Activated CD4-positive, alpha-beta T cell treated with anti-CD3 and anti-CD28 coated beads, Interleukin-2, amount 10 ng/mL, durations not matched to agents 7 days and 5 days (primary cell): ENCODE measurements at regions of chr10 and their contacts with region 1.

Region 1: GRCh38 chr10:69408318-69409175 is 8.2 kb downstream of the TACR2 start:
- DNase-seq: peak; percentile 92
- H3K4me3 Mint-ChIP-seq: peak overlapping the region; percentile 63
- H3K27ac Mint-ChIP-seq: peak overlapping the region; percentile 88
- H3K4me1 Mint-ChIP-seq: peaks cover 26% of the 10 kb centered on the region
- H3K27me3 Mint-ChIP-seq: no peaks in the 10 kb centered on the region

Region 2: DNA sequence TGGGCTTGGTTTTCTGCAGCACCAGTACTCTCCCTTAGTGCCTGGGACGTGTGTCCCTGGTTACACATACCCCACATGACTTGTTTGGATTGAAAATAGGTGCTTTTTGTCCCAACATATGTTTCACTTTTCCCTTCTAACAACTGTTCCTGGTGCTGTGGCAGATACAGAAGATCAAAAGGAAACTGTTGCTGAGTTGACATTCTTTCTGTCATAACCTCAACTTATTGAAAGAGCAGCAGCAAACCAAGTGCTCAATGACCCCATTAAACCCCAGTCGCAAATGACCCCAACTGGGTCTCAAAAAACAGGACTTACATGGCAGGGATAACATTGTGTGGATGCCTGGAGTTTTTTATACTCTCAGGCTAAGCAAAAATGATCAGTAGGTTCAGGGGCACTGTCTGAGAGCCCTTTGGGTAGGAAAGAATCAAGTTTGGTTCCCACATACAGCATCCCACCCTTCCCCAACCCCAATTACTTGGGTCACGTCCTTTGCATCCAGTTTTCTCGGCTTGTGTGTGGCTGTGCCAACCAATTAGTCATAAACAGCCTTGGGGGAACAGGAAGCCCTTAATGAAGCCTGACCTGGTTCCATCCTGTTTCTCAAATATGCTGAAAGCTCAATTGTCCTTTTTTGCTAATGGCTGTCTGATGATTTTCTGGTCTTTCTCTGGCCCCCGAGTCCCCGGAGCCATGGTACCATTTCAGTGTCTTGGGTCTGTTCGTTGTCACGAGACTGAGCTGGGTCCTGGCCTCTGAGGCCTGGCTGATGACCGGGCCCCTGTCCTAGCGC is 183.5 kb before region 1 on chr10:
- CTCF ChIA-PET with region 1: interaction called, 12 read pairs
- POLR2A ChIA-PET with region 1: no interaction called
- DNase-seq: no peak
- H3K4me3 Mint-ChIP-seq: no peak overlapping the region
- H3K27ac Mint-ChIP-seq: peak overlapping the region; percentile 78
- H3K4me1 Mint-ChIP-seq: peaks cover 81% of the 10 kb centered on the region
- H3K27me3 Mint-ChIP-seq: no peaks in the 10 kb centered on the region

Region 3: DNA sequence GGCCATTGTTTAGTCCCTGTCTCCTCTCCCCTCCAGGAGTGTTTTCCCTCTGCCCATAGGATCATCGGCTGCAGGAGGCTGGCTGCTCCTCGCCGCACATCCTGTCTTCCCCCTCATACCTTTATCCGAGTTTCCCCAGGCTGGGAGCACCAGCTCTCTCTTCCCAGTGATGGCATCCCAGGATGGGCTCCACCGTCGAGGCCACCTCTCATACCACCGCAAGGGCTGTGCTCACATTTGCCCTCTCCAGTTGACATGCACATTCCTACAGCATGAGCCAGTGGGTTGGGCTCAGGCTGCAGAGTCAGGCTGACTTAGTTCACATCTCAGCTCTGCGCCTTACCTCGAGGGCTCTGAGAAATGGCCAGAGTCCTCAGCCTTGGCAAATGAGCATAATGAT is 176.3 kb before region 1 on chr10:
- CTCF ChIA-PET with region 1: interaction called, 10 read pairs
- POLR2A ChIA-PET with region 1: no interaction called
- DNase-seq: no peak
- H3K4me3 Mint-ChIP-seq: peak overlapping the region; percentile 74
- H3K27ac Mint-ChIP-seq: peak overlapping the region; percentile 91
- H3K4me1 Mint-ChIP-seq: peaks cover 76% of the 10 kb centered on the region
- H3K27me3 Mint-ChIP-seq: peaks cover 1% of the 10 kb centered on the region

Region 4: DNA sequence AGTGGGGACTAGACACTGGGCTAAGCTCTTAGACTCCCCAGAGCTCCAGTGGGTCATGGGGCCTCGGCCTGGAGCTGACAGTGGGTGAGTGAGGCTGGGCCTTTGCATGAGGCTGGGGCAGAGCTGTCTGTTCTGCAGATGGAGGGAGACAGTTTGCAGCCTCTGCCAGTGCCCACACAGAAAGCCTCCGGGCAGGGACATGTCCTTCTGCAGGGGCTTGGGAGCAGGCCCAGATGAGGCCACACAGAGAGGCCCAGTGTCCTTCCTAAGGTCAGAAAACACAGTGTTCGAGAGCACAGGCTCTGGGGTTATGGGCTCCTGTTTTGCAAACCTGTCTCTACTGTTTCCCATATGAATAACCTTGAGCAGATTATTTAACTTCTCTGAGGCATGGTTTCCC is 155.4 kb before region 1 on chr10:
- CTCF ChIA-PET with region 1: no interaction called
- POLR2A ChIA-PET with region 1: no interaction called
- DNase-seq: no peak
- H3K4me3 Mint-ChIP-seq: no peak overlapping the region
- H3K27ac Mint-ChIP-seq: no peak overlapping the region
- H3K4me1 Mint-ChIP-seq: no peaks in the 10 kb centered on the region
- H3K27me3 Mint-ChIP-seq: no peaks in the 10 kb centered on the region

Region 5: DNA sequence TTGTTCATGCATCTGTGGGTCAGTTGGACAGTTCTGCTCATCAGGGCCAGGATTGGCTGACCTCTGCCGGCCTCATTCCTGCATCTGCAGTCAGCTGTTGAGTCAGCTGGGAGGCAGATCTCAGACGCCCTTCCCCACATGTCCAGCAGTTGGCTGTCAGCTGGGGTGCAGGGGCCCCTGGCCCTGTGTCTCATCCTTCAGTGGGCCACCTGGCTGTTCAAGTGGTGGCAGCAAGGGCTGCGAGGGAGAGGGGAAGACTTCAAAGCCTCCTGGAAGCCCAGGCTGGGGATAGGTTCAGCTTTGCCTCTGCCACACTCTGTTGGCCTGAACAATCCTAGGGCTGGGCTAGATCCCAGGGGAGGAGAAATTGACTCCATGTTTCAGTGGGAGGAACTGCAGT is 25.0 kb before region 1 on chr10:
- CTCF ChIA-PET with region 1: no interaction called
- POLR2A ChIA-PET with region 1: no interaction called
- DNase-seq: no peak
- H3K4me3 Mint-ChIP-seq: no peak overlapping the region
- H3K27ac Mint-ChIP-seq: peak overlapping the region; percentile 25
- H3K4me1 Mint-ChIP-seq: peaks cover 2% of the 10 kb centered on the region
- H3K27me3 Mint-ChIP-seq: no peaks in the 10 kb centered on the region